Activated CD4-positive, alpha-beta T cell treated with anti-CD3 and anti-CD28 coated beads, Interleukin-2, amount 10 ng/mL, durations not matched to agents 24 days and 14 days (primary cell): ENCODE measurements at regions of chr19 and their contacts with region 1.

Region 1: GRCh38 chr19:38647368-38647965 is at the start of gene ACTN4:
- DNase-seq: peak; percentile 100
- H3K4me3 Mint-ChIP-seq: peak within 1 kb of the TSS; percentile 97
- H3K27ac Mint-ChIP-seq: peak within 1 kb of the TSS; percentile 86
- H3K4me1 Mint-ChIP-seq: peaks cover 43% of the 10 kb centered on the region
- H3K27me3 Mint-ChIP-seq: no peaks in the 10 kb centered on the region
- total RNA-seq, gene ACTN4: 243 and 257 TPM in 2 replicates

Region 2: DNA sequence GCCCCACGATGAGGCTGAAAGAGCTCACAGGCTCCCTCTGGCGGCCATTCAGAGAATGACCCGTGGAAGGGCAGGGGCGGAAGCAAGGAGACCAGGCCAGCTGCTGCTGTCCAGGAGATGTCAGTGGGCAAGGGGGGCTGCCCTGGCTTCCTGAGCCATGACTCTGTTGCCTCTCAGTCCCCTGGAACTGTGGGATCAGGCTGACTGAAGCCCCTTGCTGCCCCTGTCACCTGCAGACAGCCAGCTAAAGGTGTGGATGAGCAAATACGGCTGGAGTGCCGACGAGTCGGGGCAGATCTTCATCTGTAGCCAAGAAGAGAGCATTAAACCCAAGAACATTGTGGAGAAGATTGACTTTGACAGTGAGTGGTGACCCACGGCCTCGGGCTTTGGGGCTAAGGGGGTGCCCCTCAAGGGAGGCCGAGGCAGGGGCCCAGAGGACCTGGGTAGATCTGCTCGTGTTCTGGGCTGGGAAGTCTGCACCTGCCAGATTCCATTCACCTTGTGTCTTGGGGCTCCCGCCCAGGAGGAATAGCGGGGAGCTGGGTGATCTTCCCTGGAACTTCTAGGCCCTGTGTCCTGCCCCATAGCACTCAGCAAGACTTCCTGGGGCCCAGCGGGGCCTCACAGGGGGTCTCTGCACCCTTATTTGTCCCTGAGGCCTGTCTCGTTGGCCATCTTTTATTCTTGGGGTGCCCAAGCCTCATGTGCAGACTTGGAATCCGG is 12.5 kb before region 1 on chr19:
- intact Hi-C with region 1: loop called (anchors 1 kb)
- DNase-seq: peak; percentile 94
- H3K4me3 Mint-ChIP-seq: peak overlapping the region; percentile 55
- H3K27ac Mint-ChIP-seq: peak overlapping the region; percentile 71
- H3K4me1 Mint-ChIP-seq: peaks cover 26% of the 10 kb centered on the region
- H3K27me3 Mint-ChIP-seq: no peaks in the 10 kb centered on the region

Region 3: GRCh38 chr19:38658462-38659306 is 11.2 kb after region 1 on chr19:
- intact Hi-C with region 1: loop called (anchors 1 kb)
- DNase-seq: no peak
- H3K4me3 Mint-ChIP-seq: no peak overlapping the region
- H3K27ac Mint-ChIP-seq: no peak overlapping the region
- H3K4me1 Mint-ChIP-seq: peaks cover 56% of the 10 kb centered on the region
- H3K27me3 Mint-ChIP-seq: no peaks in the 10 kb centered on the region

Region 4: GRCh38 chr19:38683393-38684080 is 36.1 kb after region 1 on chr19:
- intact Hi-C with region 1: loop called (anchors 5 kb)
- DNase-seq: peak; percentile 75
- H3K4me3 Mint-ChIP-seq: peak overlapping the region; percentile 17
- H3K27ac Mint-ChIP-seq: peak overlapping the region; percentile 73
- H3K4me1 Mint-ChIP-seq: peaks cover 82% of the 10 kb centered on the region
- H3K27me3 Mint-ChIP-seq: no peaks in the 10 kb centered on the region

Region 5: GRCh38 chr19:38781058-38781457 is 133.6 kb after region 1 on chr19:
- intact Hi-C with region 1: no loop called
- DNase-seq: no peak
- H3K4me3 Mint-ChIP-seq: no peak overlapping the region
- H3K27ac Mint-ChIP-seq: no peak overlapping the region
- H3K4me1 Mint-ChIP-seq: no peaks in the 10 kb centered on the region
- H3K27me3 Mint-ChIP-seq: peaks cover 12% of the 10 kb centered on the region

Region 6: DNA sequence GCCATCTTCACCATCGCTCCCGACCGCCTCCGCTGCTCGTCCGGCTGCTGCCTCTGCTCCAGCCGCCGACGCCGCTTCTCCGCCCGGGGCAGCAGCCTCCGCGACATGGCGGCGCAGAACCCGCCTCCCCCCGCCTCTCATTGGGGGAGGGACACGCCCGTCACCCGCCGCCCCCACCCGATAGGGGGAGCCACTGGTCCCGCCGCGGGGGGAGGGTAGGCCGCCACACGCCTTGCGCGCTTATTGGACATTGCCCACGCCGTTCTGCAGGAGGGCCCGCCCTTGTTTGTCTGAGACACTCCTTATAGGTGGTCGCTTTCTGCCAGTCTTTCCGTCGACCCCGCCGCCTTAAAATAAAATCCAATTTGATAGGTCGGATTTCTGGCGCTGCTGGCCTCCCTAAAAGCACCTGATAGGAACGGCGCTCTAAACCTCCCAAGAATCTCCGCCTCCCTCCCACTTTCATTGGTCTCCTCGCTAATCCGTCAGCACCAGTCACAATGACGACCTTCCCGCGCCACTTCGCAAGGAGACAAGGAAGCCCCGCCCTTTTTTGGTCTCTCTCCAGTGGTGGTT is 202.5 kb after region 1 on chr19 and contains the start of gene HNRNPL:
- intact Hi-C with region 1: loop called (anchors 1 kb)
- DNase-seq: peak; percentile 100
- H3K4me3 Mint-ChIP-seq: peak within 1 kb of the TSS; percentile 98
- H3K27ac Mint-ChIP-seq: peak within 1 kb of the TSS; percentile 100
- H3K4me1 Mint-ChIP-seq: peaks cover 39% of the 10 kb centered on the region
- H3K27me3 Mint-ChIP-seq: no peaks in the 10 kb centered on the region
- total RNA-seq, gene HNRNPL: 686 and 695 TPM in 2 replicates

Region 7: GRCh38 chr19:39833464-39834286 is 1186.2 kb after region 1 on chr19 and contains the start of gene DYRK1B:
- intact Hi-C with region 1: loop called (anchors 5 kb)
- DNase-seq: peak; percentile 99
- H3K4me3 Mint-ChIP-seq: peak within 1 kb of the TSS; percentile 84
- H3K27ac Mint-ChIP-seq: peak within 1 kb of the TSS; percentile 91
- H3K4me1 Mint-ChIP-seq: peaks cover 32% of the 10 kb centered on the region
- H3K27me3 Mint-ChIP-seq: peaks cover 2% of the 10 kb centered on the region
- total RNA-seq, gene DYRK1B: 3.6 and 4.5 TPM in 2 replicates